GM10248 (cell line): ENCODE measurements at regions of chr6 and their contacts with region 1.

Region 1: GRCh38 chr6:41705996-41706835 is 29.2 kb downstream of the TFEB start:
- DNase-seq: peak; percentile 92
- CTCF ChIP-seq: peak; percentile 90

Region 2: GRCh38 chr6:41386594-41386993 is 319.6 kb before region 1 on chr6:
- CTCF ChIA-PET with region 1: no interaction called
- POLR2A ChIA-PET with region 1: no interaction called
- DNase-seq: no peak
- CTCF ChIP-seq: no peak

Region 3: GRCh38 chr6:41416501-41416837 is 289.7 kb before region 1 on chr6:
- CTCF ChIA-PET with region 1: no interaction called
- POLR2A ChIA-PET with region 1: no interaction called
- DNase-seq: no peak
- CTCF ChIP-seq: no peak

Region 4: DNA sequence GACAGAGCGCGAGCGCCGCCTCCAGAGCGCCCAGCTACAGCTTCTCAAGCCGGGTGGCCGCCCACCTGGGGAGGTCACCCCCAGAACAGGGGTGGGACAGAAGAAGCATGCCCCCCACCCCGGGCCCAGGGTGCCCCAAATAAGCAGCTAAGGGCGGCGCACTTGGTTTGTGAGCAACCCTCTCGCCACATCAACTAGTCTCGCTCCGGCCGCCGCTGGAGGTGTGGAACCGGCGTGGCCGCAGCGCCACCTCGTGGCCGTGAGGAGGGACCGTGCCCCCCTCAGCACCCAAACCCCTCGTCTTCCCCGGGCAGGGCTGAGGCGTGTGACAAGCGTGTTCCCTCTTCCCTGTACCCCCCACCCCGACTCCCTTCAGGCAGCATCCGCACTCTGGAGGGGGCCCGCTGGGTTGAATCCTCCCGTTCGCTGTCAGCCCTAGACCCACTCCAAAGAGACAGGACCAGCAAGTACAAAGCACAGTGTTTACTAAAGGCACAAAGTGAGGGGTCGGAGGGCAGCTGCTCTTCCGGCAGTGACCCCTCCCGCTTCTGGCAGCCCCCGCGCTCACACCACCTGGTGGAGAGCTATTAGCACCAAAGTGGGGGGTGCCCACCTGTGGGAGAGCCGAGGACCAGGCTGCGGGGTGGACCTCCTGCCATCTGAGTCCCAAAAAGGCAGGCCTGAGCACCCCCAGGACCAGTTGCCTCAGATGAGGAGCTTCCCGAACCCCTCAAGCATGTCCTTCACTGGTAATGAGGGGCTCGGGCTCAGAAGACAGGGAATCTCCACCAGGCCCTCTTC is 22.5 kb before region 1 on chr6:
- CTCF ChIA-PET with region 1: interaction called, 57 read pairs
- POLR2A ChIA-PET with region 1: no interaction called
- DNase-seq: peak; percentile 89
- CTCF ChIP-seq: peak; percentile 89

Region 5: GRCh38 chr6:41694815-41695526 is 11.2 kb before region 1 on chr6:
- CTCF ChIA-PET with region 1: interaction called, 48 read pairs
- POLR2A ChIA-PET with region 1: interaction called, 4 read pairs
- DNase-seq: no peak
- CTCF ChIP-seq: no peak

Region 6: DNA sequence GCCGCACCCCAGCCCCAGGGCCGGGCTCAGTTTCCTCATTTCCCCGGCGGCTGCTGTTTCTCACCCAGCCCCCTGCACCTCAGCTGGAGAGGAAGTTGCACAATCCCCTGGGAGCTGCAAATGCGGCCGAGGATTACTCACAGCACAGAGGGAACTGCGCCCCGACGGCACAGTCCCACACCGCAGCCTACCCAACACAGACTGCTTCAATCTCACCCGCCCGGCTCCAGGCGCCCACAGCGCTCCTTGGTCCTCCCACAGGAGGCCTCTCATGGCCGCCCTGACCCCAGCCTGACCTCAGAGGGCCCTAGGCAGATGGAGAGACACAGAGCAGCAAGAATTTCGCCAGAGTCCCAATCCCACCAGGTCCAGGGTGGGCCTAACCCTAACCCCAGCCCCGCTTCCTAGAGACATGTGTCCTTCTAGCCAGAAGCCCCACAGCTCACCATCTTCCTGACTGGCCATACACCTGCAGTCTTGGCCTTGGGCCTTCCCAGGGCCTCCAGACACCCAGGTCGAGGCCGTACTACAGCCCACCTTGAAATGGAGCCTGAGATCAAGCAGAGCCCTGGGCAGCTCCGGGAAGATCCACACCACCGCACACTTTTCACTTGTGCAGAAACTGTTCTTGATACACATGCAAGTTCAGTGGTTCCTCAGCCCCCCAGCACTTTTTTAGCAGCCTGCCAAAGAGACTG is 17.5 kb after region 1 on chr6:
- CTCF ChIA-PET with region 1: interaction called, 264 read pairs
- POLR2A ChIA-PET with region 1: interaction called, 33 read pairs
- DNase-seq: peak; percentile 89
- CTCF ChIP-seq: no peak

Region 7: DNA sequence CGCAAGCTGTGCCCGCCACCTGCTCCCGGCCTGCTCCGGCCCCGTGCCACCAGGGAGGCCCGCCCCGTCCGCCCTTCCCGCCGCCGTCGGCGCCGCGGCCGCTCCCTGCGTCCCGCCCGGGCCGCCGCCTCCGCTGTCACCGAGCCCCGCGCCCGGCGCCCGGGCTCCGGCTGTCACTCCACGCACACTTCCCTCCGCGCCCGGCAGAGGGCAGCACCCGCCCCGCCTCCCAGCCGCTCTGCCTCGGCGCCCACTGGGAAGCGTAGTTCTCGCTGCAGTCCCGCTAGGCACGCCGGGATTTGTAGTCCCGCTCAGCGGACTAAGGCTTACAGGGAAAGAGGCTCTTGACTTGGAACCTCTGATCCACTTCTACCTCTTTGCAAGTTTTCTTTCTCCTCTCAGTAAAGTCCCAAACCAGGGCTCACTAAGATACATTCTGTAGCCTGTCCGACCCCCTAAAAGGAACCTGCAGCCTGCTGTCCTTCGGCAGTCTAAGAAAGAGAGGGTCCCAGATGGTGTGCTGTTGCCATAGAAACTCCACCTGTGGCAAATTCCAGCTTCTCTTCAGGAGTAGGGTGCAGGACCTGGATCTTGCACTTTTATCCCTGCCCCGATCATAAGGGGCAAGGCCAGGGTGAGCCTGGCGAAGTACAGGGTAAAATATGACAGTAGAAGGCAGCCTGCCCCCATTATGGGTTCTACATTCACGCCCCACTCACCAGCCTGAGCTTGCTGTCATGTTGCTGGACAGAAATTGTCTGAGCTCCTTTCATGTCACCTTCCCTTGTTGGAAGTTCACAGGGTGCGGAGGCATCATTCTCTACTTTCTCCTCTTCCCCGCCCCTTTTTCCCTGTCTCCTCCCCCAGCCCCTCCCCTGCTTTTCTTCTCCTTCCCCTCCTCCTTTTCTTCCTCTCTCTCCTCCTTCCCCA is 29.5 kb after region 1 on chr6 and contains the start of gene TFEB:
- CTCF ChIA-PET with region 1: interaction called, 264 read pairs
- POLR2A ChIA-PET with region 1: interaction called, 39 read pairs
- DNase-seq: peak; percentile 96
- CTCF ChIP-seq: peak; percentile 97

Region 8: GRCh38 chr6:41775293-41776181 is 69.3 kb after region 1 on chr6:
- CTCF ChIA-PET with region 1: interaction called, 16 read pairs
- POLR2A ChIA-PET with region 1: no interaction called
- DNase-seq: peak; percentile 81
- CTCF ChIP-seq: peak; percentile 93